ENCODE measurements at regions of chr7 and their contacts with region 1.

Region 1: DNA sequence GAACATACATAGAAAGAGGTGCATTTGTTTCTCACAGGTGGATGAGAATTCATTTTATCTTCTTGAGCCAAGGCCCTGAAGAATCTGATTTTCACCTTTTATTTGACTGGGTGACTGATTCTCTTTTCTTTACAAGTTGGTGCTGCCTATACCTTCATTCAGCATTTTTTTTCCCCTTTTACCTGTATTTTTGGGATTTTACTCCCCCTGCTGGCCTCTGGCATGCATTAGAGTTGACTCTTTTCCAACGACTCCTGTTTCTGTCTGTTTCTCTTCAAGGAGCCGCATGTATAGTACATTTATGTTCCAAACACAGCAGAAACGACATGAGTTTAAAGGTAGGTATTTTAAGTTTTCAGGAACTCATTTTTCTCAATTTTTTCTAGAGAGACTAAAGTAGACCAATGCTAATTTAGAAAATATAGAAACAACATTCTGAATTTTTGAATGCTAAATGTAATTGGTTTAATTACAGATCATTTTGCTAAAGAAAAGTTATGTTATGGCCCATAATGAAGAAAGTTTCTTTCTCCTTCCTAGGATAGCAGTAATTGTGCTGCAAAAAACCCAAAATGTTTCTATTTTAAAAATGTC is 149.8 kb upstream of the HDAC9 start:
- DNase-seq: no peak
- ATAC-seq: peak; percentile 23 to 58

Region 2: DNA sequence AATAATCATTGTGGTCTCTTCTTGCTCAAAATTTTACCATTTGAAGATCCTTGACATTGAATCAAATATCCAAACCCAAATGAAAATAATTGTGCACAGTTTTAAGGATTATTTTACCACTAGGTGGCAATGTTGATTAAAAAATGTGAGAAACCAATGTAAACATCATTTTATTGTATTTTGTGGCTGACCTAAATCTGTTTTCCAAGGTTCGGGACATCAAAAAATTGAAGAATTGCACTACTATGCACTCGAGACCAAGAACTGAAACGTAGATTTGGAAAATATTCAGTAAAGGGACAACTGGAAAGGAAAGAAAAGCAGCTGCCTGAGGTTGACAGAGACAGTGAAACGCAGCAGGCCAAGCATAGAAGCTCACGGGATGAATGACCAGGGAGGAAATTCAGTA is 664.8 kb before region 1 on chr7:
- intact Hi-C with region 1: loop called in 1 of 2 experiments (anchors 5 kb)
- DNase-seq: no peak
- ATAC-seq: peak in 1 of 2 donors; percentile 9

Region 3: DNA sequence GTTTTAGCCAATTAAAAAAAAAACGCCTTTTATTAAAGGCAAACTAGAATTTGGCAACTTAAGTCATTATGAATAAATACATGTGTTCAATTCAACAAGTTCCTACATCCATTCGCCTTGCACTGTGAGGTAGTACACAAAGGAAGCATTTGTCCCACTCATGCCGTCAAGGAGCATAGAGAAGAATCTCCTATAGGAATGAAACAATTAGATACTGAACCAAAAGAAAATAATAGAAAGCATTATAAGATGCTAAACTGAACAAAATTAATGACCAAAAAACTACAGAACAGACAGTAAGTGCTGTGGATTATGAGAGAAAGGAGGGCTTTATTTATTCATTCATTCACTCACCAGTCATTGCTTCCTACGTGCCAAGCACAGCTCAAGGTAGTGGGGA is 447.6 kb before region 1 on chr7:
- intact Hi-C with region 1: no loop called
- DNase-seq: no peak
- ATAC-seq: no peak

Region 4: GRCh38 chr7:17965603-17966002 is 380.1 kb before region 1 on chr7:
- intact Hi-C with region 1: loop called in 1 of 2 experiments (anchors 5 kb)
- DNase-seq: no peak
- ATAC-seq: no peak

Region 5: DNA sequence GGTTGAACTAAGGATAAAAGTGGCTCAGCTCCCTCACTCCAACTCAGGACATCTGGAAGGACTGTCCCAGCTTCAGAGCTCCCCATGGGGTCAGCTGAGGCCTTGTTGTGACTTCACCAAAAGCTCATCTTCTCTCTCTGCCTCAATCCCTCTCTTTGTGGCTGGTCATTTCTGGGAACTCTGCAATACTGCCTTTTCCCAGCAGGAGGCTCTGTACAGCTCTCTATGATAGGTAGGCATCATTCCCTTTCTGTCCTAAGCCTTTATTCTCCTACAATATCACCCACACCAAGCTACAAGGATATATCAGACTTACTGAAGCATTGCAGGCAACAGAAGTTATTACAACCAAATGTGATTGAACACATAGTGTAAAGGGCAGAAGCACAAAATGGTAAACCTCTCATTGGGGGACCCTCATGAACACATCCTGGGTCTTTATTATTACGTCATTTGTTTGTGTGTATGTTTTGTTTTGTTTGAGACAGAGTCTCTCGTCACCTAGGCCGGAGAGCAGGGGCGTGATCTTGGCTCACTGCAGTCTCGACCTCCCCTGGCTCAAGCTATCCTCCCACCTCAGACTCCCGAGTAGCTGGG is 281.4 kb before region 1 on chr7:
- intact Hi-C with region 1: loop called in 1 of 2 experiments (anchors 10 kb)
- DNase-seq: no peak
- ATAC-seq: no peak

Region 6: DNA sequence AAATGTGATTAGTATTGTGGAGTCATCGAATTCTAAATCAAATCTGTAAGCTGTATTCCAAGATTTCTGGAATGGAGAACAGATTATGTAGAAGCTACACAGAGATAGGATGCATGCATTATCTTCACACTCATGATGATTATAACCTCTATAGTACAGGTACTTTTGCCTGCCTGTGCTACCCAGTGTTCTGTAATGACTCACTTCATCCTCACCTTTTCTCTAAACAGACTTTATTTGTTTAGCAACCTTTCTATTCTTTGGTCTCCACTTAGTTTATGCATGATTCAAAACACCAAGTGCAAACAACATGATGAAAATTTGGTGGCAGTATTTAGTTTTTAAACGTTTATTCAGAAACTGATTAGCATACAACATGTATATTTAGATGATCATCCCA is 249.7 kb before region 1 on chr7:
- intact Hi-C with region 1: no loop called
- DNase-seq: no peak
- ATAC-seq: no peak

Region 7: DNA sequence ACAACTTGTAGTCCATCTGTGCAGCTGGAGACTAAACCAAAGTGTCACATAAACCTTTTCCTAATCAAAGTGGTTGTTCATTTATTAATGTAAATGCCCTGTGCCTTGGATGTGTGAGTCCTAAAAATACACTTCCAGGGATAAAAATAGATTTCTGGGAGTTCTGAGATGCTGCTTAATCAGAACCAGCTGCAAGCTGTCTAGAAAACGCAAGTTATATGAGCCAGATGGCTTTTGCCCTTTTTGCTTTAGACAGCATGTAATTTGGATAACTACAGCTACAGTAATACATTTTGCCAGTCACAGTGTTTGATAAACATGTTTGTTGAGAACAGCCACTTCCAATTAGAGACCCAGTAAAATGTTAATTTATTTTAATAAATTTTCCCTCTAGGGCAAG is 133.0 kb before region 1 on chr7:
- intact Hi-C with region 1: loop called in 1 of 2 experiments (anchors 5 kb)
- DNase-seq: no peak
- ATAC-seq: peak in 1 of 2 donors; percentile 59